GM12878 (cell line): ENCODE measurements at regions of chr7 and their contacts with region 1.

Region 1: GRCh38 chr7:74401137-74401859 is 52.4 kb upstream of the GTF2IRD1 start:
- DNase-seq: no peak
- ATAC-seq: peak; percentile 79
- H3K4me3 ChIP-seq: no peak overlapping the region
- H3K27ac ChIP-seq: no peak overlapping the region
- H3K4me1 ChIP-seq: no peaks in the 10 kb centered on the region
- H3K27me3 ChIP-seq: no peaks in the 10 kb centered on the region
- CTCF ChIP-seq: peak; percentile 90 to 95 (median 95)
- EP300 ChIP-seq: no peak
- POLR2A ChIP-seq: no peak
- RAD21 ChIP-seq: peak; percentile 88

Region 2: GRCh38 chr7:73999615-74000420 is 401.5 kb before region 1 on chr7:
- CTCF ChIA-PET with region 1: no interaction called
- POLR2A ChIA-PET with region 1: interaction called, 10 read pairs
- RAD21 ChIA-PET with region 1: no interaction called
- SMC1A ChIA-PET with region 1: no interaction called
- in situ Hi-C with region 1: no loop called
- intact Hi-C with region 1: no loop called
- DNase-seq: no peak
- ATAC-seq: no peak
- H3K4me3 ChIP-seq: no peak overlapping the region
- H3K27ac ChIP-seq: no peak overlapping the region
- H3K4me1 ChIP-seq: no peaks in the 10 kb centered on the region; the same call in 1 of the 2 replicates
- H3K27me3 ChIP-seq: no peaks in the 10 kb centered on the region
- CTCF ChIP-seq: no peak
- EP300 ChIP-seq: no peak
- POLR2A ChIP-seq: no peak
- RAD21 ChIP-seq: no peak

Region 3: GRCh38 chr7:74033372-74034311 is 367.7 kb before region 1 on chr7:
- CTCF ChIA-PET with region 1: no interaction called
- POLR2A ChIA-PET with region 1: no interaction called
- RAD21 ChIA-PET with region 1: no interaction called
- SMC1A ChIA-PET with region 1: no interaction called
- in situ Hi-C with region 1: no loop called
- intact Hi-C with region 1: no loop called
- DNase-seq: no peak
- ATAC-seq: no peak
- H3K4me3 ChIP-seq: no peak overlapping the region
- H3K27ac ChIP-seq: no peak overlapping the region
- H3K4me1 ChIP-seq: no peaks in the 10 kb centered on the region
- H3K27me3 ChIP-seq: peaks cover 9 to 10% of the 10 kb centered on the region in 2 experiments; a peak in 3 of 4 replicates
- CTCF ChIP-seq: no peak
- EP300 ChIP-seq: no peak
- POLR2A ChIP-seq: no peak
- RAD21 ChIP-seq: no peak

Region 4: DNA sequence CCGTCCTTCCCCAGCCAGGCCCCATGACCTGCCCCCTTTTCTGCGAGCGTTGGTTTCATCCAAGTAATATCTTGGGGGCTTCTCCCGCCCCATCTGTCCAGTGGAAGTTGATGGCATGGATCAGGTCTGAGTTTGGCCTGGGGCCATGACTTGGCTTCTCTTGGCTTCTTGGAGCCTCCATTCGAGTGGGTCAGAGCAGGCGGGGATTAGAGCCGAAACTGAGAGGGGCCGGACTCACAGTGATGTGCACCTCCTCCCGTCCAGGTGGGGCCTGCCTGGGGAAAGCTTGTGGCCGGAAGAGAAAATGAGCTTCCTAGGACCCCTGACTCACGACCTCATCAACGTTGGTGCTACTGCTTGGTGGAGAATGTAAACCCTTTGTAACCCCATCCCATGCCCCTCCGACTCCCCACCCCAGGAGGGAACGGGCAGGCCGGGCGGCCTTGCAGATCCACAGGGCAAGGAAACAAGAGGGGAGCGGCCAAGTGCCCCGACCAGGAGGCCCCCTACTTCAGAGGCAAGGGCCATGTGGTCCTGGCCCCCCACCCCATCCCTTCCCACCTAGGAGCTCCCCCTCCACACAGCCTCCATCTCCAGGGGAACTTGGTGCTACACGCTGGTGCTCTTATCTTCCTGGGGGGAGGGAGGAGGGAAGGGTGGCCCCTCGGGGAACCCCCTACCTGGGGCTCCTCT is 332.8 kb before region 1 on chr7:
- CTCF ChIA-PET with region 1: interaction called, 36 read pairs
- POLR2A ChIA-PET with region 1: no interaction called
- RAD21 ChIA-PET with region 1: interaction called, 15 read pairs
- SMC1A ChIA-PET with region 1: interaction called, 12 read pairs
- in situ Hi-C with region 1: loop called (anchors 5 kb)
- intact Hi-C with region 1: loop called (anchors 1 kb)
- DNase-seq: no peak
- ATAC-seq: no peak
- H3K4me3 ChIP-seq: no peak overlapping the region
- H3K27ac ChIP-seq: no peak overlapping the region
- H3K4me1 ChIP-seq: no peaks in the 10 kb centered on the region
- H3K27me3 ChIP-seq: no peaks in the 10 kb centered on the region
- CTCF ChIP-seq: no peak
- EP300 ChIP-seq: no peak
- POLR2A ChIP-seq: no peak
- RAD21 ChIP-seq: no peak

Region 5: GRCh38 chr7:74183613-74184450 is 217.5 kb before region 1 on chr7:
- CTCF ChIA-PET with region 1: interaction called, 14 read pairs
- POLR2A ChIA-PET with region 1: no interaction called
- RAD21 ChIA-PET with region 1: interaction called, 10 read pairs
- SMC1A ChIA-PET with region 1: interaction called, 5 read pairs
- in situ Hi-C with region 1: no loop called
- intact Hi-C with region 1: no loop called
- DNase-seq: no peak
- ATAC-seq: peak; percentile 76
- H3K4me3 ChIP-seq: no peak overlapping the region
- H3K27ac ChIP-seq: no peak overlapping the region
- H3K4me1 ChIP-seq: no peaks in the 10 kb centered on the region
- H3K27me3 ChIP-seq: no peaks in the 10 kb centered on the region
- CTCF ChIP-seq: peak; percentile 35 to 55 (median 44)
- EP300 ChIP-seq: no peak
- POLR2A ChIP-seq: no peak
- RAD21 ChIP-seq: peak; percentile 44

Region 6: GRCh38 chr7:74199551-74200242 is 201.6 kb before region 1 on chr7:
- CTCF ChIA-PET with region 1: interaction called, 190 read pairs
- POLR2A ChIA-PET with region 1: no interaction called
- RAD21 ChIA-PET with region 1: interaction called, 127 read pairs
- SMC1A ChIA-PET with region 1: interaction called, 86 read pairs
- in situ Hi-C with region 1: no loop called
- intact Hi-C with region 1: no loop called
- DNase-seq: no peak
- ATAC-seq: no peak
- H3K4me3 ChIP-seq: no peak overlapping the region
- H3K27ac ChIP-seq: no peak overlapping the region
- H3K4me1 ChIP-seq: peaks cover 12% of the 10 kb centered on the region
- H3K27me3 ChIP-seq: no peaks in the 10 kb centered on the region
- CTCF ChIP-seq: no peak
- EP300 ChIP-seq: no peak
- POLR2A ChIP-seq: no peak
- RAD21 ChIP-seq: no peak

Region 7: DNA sequence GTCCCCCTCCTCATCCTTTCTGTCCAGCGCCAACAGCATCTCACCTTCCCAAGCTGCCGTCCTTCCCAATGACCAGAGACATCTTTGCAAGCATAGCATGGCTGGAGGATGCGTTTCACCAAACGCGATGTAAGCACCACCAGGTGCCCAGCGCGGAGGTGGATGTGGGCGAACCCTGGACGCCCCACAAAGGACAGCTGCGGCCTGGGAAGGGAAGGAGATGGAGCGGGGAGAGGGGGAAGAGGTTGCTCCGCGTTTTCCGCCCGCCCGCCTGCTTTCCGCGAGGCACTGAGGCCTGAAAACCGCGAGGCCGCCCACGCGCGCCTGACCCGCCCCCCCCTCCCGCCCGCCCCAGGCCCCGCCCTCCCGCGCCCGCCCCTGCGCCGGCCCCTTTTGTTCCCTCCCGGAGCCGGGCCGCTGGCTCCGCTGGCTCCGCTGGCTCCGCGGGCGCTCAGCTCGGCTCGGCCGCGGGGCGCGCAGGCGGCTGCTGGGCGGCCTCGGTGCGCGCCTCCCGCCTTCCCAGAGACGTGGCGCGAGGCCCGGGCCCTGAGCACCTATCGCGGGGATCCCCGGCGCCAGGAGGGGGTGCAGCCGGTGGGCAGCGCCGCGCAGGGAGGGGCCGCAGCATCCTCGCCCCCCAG is 112.2 kb before region 1 on chr7 and contains the start of gene CLIP2:
- CTCF ChIA-PET with region 1: interaction called, 11 read pairs
- POLR2A ChIA-PET with region 1: no interaction called
- RAD21 ChIA-PET with region 1: interaction called, 6 read pairs
- SMC1A ChIA-PET with region 1: interaction called, 7 read pairs
- in situ Hi-C with region 1: no loop called
- intact Hi-C with region 1: loop called (anchors 10 kb)
- DNase-seq: no peak
- ATAC-seq: peak; percentile 49
- H3K4me3 ChIP-seq: peak within 1 kb of the TSS; percentile 97
- H3K27ac ChIP-seq: peak within 1 kb of the TSS; percentile 93
- H3K4me1 ChIP-seq: peaks cover 44% of the 10 kb centered on the region
- H3K27me3 ChIP-seq: no peaks in the 10 kb centered on the region
- CTCF ChIP-seq: no peak
- EP300 ChIP-seq: no peak
- POLR2A ChIP-seq: peak; percentile 75
- RAD21 ChIP-seq: 0 out of 2 replicates have a peak, but pooled peaks have one; percentile 5
- polyA plus RNA-seq, gene CLIP2: 0.26 to 0.82 TPM

Region 8: GRCh38 chr7:74379938-74380337 is 21.4 kb before region 1 on chr7:
- CTCF ChIA-PET with region 1: interaction called, 14 read pairs
- POLR2A ChIA-PET with region 1: interaction called, 3 read pairs
- RAD21 ChIA-PET with region 1: interaction called, 4 read pairs
- SMC1A ChIA-PET with region 1: interaction called, 4 read pairs
- in situ Hi-C with region 1: no loop called
- intact Hi-C with region 1: no loop called
- DNase-seq: no peak
- ATAC-seq: no peak
- H3K4me3 ChIP-seq: no peak overlapping the region
- H3K27ac ChIP-seq: no peak overlapping the region
- H3K4me1 ChIP-seq: no peaks in the 10 kb centered on the region
- H3K27me3 ChIP-seq: no peaks in the 10 kb centered on the region
- CTCF ChIP-seq: no peak
- EP300 ChIP-seq: no peak
- POLR2A ChIP-seq: no peak
- RAD21 ChIP-seq: no peak